ENCODE measurements at regions of chr15 and their contacts with region 1.

Region 1: GRCh38 chr15:73633111-73633990 is at the start of gene NPTN:
- DNase-seq: peak; percentile 100
- total RNA-seq, gene NPTN: 175 TPM

Region 2: GRCh38 chr15:73305331-73306211 is 327.8 kb before region 1 on chr15:
- intact Hi-C with region 1: loop called (anchors 5 kb)
- DNase-seq: no peak

Region 3: DNA sequence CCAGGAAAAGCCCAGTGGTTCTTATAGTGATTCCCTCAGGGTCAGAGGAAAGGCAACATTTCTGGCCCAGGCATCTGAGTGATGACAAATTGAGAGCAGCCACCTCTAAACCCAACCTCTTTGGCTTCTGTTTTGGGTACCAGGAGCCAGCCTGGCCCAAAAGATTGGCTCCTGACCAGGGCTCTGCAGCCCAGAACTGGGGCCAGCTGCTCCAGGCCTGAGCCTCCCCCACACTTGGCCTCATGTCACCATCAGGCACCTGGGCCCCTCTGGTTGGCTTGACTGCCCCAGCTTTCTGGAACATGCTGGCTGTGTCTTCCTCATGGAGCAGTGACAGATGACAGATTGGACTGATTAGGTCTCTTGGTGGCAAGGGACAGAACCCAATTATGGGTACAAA is 238.6 kb before region 1 on chr15:
- intact Hi-C with region 1: loop called (anchors 10 kb)
- DNase-seq: peak; percentile 82

Region 4: GRCh38 chr15:73560501-73561117 is 72.7 kb before region 1 on chr15:
- intact Hi-C with region 1: loop called (anchors 1 kb)
- DNase-seq: no peak

Region 5: DNA sequence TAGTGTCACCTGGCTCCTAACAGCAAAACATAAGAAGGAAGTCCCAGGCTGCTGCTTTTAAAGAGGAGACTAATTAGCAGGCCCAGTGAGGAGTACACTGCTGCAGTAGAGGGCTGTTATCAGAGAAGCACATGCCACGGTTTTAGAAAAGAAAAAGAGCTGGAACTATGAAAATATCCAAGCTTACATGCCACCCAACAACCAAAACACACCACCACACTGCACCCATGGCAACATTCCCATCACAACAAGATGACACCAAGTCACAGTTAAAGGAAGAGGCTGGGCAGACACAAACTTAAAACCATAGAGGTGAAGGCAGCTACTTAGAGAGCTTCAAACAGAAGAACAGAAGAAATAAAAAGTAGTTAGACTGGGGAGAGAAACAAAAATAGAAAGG is 37.2 kb before region 1 on chr15:
- intact Hi-C with region 1: loop called (anchors 2 kb)
- DNase-seq: no peak

Region 6: DNA sequence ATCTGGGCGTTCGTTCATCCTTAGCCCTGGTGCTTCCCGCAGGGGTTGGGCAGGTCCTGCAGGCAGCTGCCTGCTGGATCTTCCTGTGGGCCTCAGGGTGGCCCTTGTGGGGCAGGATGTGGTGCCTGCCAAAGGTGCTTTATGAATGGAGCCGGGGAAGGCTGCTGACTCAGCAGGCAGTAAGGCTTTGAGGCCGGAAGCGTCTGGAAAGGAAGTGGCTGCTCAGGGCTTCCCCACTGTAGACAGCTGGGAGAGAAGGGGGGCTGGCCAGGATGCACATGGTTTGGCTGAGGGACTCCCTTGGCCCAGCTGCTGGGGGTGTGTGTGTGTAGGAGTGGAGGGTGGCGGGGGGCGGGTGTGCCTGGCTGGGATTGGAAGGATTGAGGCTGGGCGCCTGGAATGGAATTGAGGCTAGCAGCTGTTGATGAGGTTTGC is 63.7 kb after region 1 on chr15:
- intact Hi-C with region 1: loop called (anchors 2 kb)
- DNase-seq: peak; percentile 93